ENCODE measurements at regions of chr7 and their contacts with region 1.

Region 1: GRCh38 chr7:30478349-30479201 is at the start of gene NOD1:
- DNase-seq: peak; percentile 70
- H3K4me3 Mint-ChIP-seq: peak within 1 kb of the TSS; percentile 91
- H3K27ac Mint-ChIP-seq: peak within 1 kb of the TSS; percentile 89
- H3K4me1 Mint-ChIP-seq: peaks cover 51% of the 10 kb centered on the region
- H3K27me3 Mint-ChIP-seq: no peaks in the 10 kb centered on the region
- total RNA-seq, gene NOD1: 14.8 and 15.8 TPM in 2 replicates

Region 2: GRCh38 chr7:30164567-30164966 is 314.0 kb before region 1 on chr7:
- intact Hi-C with region 1: loop called (anchors 2 kb)
- DNase-seq: no peak
- H3K4me3 Mint-ChIP-seq: no peak overlapping the region
- H3K27ac Mint-ChIP-seq: peak overlapping the region; percentile 48
- H3K4me1 Mint-ChIP-seq: peaks cover 40% of the 10 kb centered on the region
- H3K27me3 Mint-ChIP-seq: peaks cover 2% of the 10 kb centered on the region

Region 3: GRCh38 chr7:30322271-30323005 is 156.1 kb before region 1 on chr7:
- intact Hi-C with region 1: loop called (anchors 2 kb)
- DNase-seq: peak; percentile 16
- H3K4me3 Mint-ChIP-seq: peak overlapping the region; percentile 70
- H3K27ac Mint-ChIP-seq: peak overlapping the region; percentile 92
- H3K4me1 Mint-ChIP-seq: peaks cover 54% of the 10 kb centered on the region
- H3K27me3 Mint-ChIP-seq: no peaks in the 10 kb centered on the region

Region 4: DNA sequence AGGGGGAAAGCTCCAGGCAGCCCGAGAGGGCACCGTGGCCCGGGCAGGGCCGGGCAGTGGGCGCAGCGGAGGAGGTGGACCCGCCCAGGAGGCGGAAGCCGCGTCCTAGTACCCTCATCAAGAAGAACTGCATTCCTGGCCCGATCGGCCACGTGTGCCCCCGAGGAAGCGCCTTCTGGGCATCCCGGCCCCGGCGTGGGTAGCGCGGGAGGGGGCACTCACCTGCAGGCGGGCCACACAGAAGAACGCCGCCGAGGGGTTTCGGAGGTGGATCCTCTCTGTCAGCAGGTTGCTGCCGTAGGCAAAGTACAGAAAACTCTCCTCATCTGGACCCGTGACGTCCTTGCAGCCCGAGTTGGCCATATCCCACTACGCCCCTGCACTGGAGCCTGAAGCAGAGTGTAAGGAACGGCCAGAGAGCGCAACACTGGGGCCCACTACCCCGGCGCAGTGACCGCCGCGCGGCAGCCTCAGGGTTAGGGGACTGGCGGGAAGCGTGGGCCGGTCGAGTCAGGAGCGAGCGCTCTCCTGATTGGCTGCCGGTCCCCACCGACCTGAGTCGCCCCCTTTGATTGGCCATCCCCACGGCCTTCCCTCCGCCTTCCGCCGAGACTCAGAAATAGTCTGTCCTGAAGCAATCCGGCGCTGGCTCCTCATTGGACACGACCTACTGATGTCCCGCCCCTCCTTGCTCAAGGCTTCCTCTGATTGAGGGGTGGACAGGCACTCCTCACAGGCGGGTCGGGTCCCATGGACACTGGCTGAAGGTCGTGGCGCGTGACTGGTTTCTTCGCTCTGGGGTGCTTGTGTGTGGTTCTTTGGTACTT is 26.0 kb after region 1 on chr7 and contains the start of gene GGCT:
- intact Hi-C with region 1: loop called (anchors 1 kb)
- DNase-seq: peak; percentile 97
- H3K4me3 Mint-ChIP-seq: peak within 1 kb of the TSS; percentile 85
- H3K27ac Mint-ChIP-seq: peak within 1 kb of the TSS; percentile 88
- H3K4me1 Mint-ChIP-seq: peaks cover 50% of the 10 kb centered on the region
- H3K27me3 Mint-ChIP-seq: no peaks in the 10 kb centered on the region
- total RNA-seq, gene GGCT: 71.6 and 72.7 TPM in 2 replicates